ENCODE measurements at regions of chr2 and their contacts with region 1.

Region 1: DNA sequence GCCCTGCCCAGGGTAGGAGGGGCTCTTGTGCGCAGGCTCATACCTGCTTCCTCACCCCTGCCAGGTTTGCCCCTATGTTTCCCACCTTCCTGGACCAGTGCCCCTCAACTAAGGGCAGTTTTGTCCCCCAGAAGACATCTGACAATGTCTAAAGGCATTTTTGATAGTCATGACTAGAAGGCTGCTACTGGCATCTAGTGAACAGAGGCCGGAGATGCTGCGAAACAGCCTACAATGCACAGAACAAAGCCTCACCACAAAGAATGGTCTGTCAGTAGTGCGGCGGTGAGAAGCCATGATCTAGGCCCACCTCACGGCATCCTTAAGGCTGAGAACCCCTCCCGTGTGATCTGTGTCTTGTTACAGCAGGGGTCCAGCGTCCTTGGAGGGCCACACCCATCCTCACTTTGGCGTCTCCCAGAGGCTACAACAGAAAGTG is 96.0 kb downstream of the TMEM17 start:
- DNase-seq: no peak
- H3K4me3 Mint-ChIP-seq: no peak overlapping the region
- H3K27ac Mint-ChIP-seq: no peak overlapping the region
- H3K4me1 Mint-ChIP-seq: peaks cover 36% of the 10 kb centered on the region
- H3K27me3 Mint-ChIP-seq: no peaks in the 10 kb centered on the region
- CTCF ChIP-seq: no peak

Region 2: DNA sequence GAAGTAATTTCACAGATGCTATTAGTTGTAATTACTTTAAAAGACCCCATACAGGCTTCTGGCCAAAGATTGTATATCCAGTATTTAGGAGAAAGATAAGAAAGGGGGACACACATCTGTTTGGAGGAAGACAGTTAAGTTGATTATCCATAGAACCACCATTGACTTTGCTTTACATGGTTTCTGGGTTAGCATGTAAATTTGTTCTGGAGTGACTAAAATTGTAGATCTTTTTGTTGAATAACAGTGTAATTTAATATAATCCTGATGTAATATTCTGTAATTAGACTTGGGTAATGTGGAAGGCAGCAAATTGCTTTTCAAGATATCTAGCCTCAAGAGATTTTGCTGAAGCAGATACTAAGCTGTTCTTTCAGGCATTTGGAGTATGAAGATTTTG is 487.3 kb before region 1 on chr2:
- CTCF ChIA-PET with region 1: no interaction called
- intact Hi-C with region 1: loop called (anchors 1 kb)
- DNase-seq: no peak
- H3K4me3 Mint-ChIP-seq: no peak overlapping the region
- H3K27ac Mint-ChIP-seq: no peak overlapping the region
- H3K4me1 Mint-ChIP-seq: no peaks in the 10 kb centered on the region
- H3K27me3 Mint-ChIP-seq: no peaks in the 10 kb centered on the region
- CTCF ChIP-seq: no peak

Region 3: GRCh38 chr2:61993444-61994024 is 416.5 kb before region 1 on chr2:
- CTCF ChIA-PET with region 1: interaction called, 12 read pairs
- intact Hi-C with region 1: loop called (anchors 1 kb)
- DNase-seq: peak; percentile 16
- H3K4me3 Mint-ChIP-seq: no peak overlapping the region
- H3K27ac Mint-ChIP-seq: no peak overlapping the region
- H3K4me1 Mint-ChIP-seq: peaks cover 4% of the 10 kb centered on the region
- H3K27me3 Mint-ChIP-seq: no peaks in the 10 kb centered on the region
- CTCF ChIP-seq: peak; percentile 16

Region 4: DNA sequence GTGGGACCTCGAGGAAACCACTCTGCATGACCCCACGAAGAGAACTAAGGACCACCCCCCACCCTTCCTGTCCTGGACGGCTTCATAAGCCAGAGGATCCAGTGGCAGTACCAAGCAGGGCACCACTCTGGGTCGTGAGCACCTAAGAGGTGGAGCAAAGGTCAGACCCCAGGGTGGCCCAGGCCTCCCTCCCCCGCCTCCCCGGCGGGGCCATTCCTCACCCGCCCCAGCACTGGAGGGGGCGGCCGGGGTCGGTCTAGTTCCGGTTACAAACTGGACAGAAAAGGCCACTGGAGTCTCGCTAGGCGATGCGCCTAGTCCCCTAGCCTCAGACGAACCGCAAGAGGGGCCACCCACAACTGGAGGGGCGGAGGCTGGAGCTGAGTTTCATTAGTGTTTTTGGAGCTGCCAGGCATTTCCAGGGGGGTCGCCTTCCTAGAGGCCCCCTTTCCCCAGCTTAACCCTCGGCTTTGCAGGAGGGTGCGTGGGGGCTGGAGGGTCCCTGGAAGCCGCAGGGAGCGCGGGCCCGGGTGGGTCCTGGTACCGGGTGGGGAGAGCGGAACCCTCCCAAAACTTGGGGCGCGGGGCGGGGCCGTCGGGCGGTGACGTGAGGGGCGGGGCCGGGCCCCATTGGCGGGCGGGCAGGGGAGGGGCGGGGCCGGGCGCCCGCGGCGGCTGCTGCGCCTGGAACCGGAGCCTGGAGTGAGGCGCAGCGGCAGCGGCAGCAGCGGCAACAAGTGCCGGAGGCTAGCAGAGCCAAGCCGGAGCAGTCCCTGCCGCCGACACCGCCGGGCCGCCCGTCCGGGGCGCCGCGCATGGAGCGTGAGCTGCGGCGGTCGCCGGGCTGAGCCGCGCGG is 214.4 kb before region 1 on chr2 and contains the start of gene B3GNT2:
- CTCF ChIA-PET with region 1: no interaction called
- intact Hi-C with region 1: loop called (anchors 5 kb)
- DNase-seq: peak; percentile 78
- H3K4me3 Mint-ChIP-seq: peak within 1 kb of the TSS; percentile 77
- H3K27ac Mint-ChIP-seq: peak within 1 kb of the TSS; percentile 73
- H3K4me1 Mint-ChIP-seq: peaks cover 26% of the 10 kb centered on the region
- H3K27me3 Mint-ChIP-seq: peaks cover 26% of the 10 kb centered on the region
- CTCF ChIP-seq: no peak
- total RNA-seq, gene B3GNT2: 23.8 and 27.0 TPM in 2 replicates

Region 5: DNA sequence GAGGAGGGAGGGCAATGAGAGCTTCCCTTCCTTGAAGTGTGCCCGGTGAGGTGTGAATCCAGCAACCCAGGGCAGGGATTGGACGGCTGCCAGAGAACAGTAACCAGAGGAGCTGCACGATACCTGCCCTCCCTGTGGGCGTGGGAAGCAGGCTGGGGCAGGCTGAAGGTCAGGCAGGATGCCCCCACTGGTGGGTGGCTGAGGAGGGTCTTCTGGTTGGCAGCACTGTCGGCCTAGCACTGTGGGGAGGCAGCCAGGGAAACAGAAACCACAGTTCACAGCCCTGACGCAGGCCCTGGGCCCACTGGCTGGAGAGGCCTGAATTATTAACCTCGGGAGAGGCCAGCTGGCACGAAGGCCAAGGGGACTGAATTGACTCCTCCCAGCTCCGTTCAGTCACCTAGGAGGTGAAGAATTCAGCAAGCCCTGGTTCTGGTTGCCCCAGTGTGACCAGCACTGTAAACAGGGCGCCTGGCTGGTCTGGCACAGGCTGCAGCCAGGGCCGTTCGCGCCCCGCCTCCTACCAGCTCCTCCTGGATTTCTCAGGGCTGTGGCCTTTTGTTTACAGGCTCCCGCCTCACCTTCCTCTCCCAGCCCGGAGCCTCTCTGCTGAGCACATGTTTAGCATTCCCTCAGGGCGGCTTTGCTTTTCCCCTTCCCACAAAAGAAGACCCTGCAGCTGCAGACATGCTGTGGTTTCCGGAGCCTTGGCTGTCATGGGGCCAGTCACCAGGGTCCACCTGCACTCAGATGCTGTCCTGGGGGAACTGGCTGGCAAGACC is 116.4 kb before region 1 on chr2:
- CTCF ChIA-PET with region 1: interaction called, 4 read pairs
- intact Hi-C with region 1: loop called (anchors 5 kb)
- DNase-seq: peak; percentile 84
- H3K4me3 Mint-ChIP-seq: peak overlapping the region; percentile 39
- H3K27ac Mint-ChIP-seq: peak overlapping the region; percentile 79
- H3K4me1 Mint-ChIP-seq: peaks cover 27% of the 10 kb centered on the region
- H3K27me3 Mint-ChIP-seq: no peaks in the 10 kb centered on the region
- CTCF ChIP-seq: no peak

Region 6: DNA sequence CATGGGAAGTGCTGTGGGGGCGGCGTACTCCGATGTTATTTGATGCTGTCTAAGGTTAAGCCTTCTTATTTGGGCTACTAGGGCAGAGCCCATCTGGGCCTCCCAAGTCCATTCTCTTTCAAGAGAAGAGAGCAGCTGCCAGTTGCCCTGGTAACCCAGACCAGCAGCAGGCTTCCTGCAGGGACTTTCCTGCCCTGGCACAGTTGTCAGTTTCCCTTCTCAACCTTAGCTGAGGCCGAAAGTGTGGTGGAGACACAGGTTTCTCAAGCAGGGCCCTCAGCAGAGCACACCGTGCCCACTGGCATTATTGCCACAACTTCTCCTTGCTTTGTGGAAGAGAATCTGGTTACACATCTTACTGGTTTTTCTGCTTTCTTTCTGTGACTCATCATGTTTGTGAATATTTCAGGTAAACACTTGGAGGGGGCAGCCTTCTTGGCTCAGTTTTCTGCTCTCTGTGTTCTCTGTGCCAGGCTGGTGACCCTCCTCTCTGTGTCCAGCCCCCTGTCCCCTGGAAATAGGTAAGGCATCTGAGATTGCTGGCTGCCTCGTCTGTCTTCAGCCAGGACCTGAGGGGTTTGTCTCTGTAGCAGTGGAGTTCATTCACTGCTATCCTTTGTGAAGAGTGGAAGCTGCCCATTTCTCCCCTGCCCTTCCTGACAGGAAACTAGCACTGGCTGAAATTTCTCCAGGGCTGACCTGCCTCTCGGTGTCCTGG is 103.1 kb before region 1 on chr2:
- CTCF ChIA-PET with region 1: no interaction called
- intact Hi-C with region 1: loop called (anchors 5 kb)
- DNase-seq: peak; percentile 62
- H3K4me3 Mint-ChIP-seq: peak overlapping the region; percentile 41
- H3K27ac Mint-ChIP-seq: peak overlapping the region; percentile 93
- H3K4me1 Mint-ChIP-seq: peaks cover 55% of the 10 kb centered on the region
- H3K27me3 Mint-ChIP-seq: no peaks in the 10 kb centered on the region
- CTCF ChIP-seq: no peak

Region 7: GRCh38 chr2:62478093-62478580 is 68.1 kb after region 1 on chr2:
- CTCF ChIA-PET with region 1: no interaction called
- intact Hi-C with region 1: no loop called
- DNase-seq: peak; percentile 27
- H3K4me3 Mint-ChIP-seq: no peak overlapping the region
- H3K27ac Mint-ChIP-seq: peak overlapping the region; percentile 28
- H3K4me1 Mint-ChIP-seq: peaks cover 14% of the 10 kb centered on the region
- H3K27me3 Mint-ChIP-seq: no peaks in the 10 kb centered on the region
- CTCF ChIP-seq: no peak

Measured in Calu3 (cell line).